ENCODE measurements at regions of chr5 and their contacts with region 1.

Region 1: GRCh38 chr5:180802325-180803180 is at the start of gene MGAT1:
- DNase-seq: peak; percentile 82
- ATAC-seq: peak; percentile 60
- H3K4me3 Mint-ChIP-seq: peak within 1 kb of the TSS; percentile 78
- H3K27ac Mint-ChIP-seq: peak within 1 kb of the TSS; percentile 100
- H3K4me1 Mint-ChIP-seq: peaks cover 76% of the 10 kb centered on the region
- H3K27me3 Mint-ChIP-seq: no peaks in the 10 kb centered on the region
- total RNA-seq, gene MGAT1: 141 to 142 TPM

Region 2: DNA sequence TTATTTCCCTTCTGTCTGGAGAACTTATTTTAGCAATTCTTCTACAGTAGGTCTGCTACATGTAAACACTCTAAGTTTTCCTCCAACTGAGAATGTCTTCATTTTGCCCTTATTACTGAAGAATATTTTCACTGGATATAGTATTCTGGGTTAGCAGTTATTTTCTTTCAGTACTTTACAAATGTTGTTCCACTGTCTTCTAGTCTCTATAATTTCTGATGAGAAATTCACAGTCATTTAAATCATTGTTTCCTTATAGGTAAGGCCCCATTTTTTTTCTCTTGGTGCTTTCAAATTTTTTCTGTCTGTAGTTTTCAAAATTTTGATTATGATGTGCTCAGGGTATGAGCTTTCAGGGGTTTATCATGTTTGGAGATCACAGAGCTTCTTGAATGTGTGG is 30.7 kb before region 1 on chr5:
- CTCF ChIA-PET with region 1: no interaction called
- DNase-seq: no peak
- ATAC-seq: no peak
- H3K4me3 Mint-ChIP-seq: no peak overlapping the region
- H3K27ac Mint-ChIP-seq: no peak overlapping the region
- H3K4me1 Mint-ChIP-seq: no peaks in the 10 kb centered on the region
- H3K27me3 Mint-ChIP-seq: peaks cover 28% of the 10 kb centered on the region

Region 3: GRCh38 chr5:180831139-180832048 is 28.8 kb after region 1 on chr5:
- CTCF ChIA-PET with region 1: interaction called, 16 read pairs
- DNase-seq: peak; percentile 84
- ATAC-seq: peak; percentile 86
- H3K4me3 Mint-ChIP-seq: peak overlapping the region; percentile 100
- H3K27ac Mint-ChIP-seq: peak overlapping the region; percentile 98
- H3K4me1 Mint-ChIP-seq: peaks cover 31% of the 10 kb centered on the region
- H3K27me3 Mint-ChIP-seq: no peaks in the 10 kb centered on the region